Tibial artery (tissue), 4 donors: ENCODE measurements at regions of chr9 and their contacts with region 1.

Region 1: GRCh38 chr9:136381311-136381710 is 7.8 kb upstream of the CARD9 start:
- DNase-seq: no peak
- H3K4me3 ChIP-seq: no peak overlapping the region
- H3K27ac ChIP-seq: no peak overlapping the region
- H3K4me1 ChIP-seq: no peaks in the 10 kb centered on the region
- H3K27me3 ChIP-seq: no peaks in the 10 kb centered on the region
- CTCF ChIP-seq: no peak

Region 2: DNA sequence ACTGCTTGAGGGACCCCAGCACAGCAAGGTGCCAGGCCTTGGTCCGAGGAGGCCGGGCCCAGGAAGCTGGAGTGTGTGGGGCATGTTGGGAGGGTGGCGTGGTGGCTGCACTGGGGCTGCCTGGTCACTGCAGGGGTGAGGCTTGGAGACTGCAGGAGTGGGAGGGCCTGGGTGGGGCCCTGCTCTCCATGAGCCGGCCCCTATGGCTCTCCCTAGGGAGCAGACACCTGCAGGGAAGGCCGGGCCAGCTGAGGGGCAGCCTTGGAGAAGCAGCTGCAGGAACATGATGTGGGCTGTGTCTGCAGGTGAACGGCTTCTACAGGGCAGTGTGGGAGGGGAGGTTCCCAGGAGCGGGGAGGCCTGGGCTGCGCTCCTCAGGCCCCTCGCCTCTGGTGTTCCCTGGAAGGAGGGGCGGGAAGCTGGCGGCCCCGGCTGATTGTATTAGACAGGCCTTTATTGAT is 220.9 kb before region 1 on chr9:
- intact Hi-C with region 1: no loop called
- DNase-seq: no peak
- H3K4me3 ChIP-seq: no peak overlapping the region
- H3K27ac ChIP-seq: no peak overlapping the region
- H3K4me1 ChIP-seq: no peaks in the 10 kb centered on the region
- H3K27me3 ChIP-seq: peaks cover 0 to 53% of the 10 kb centered on the region in 2 donors
- CTCF ChIP-seq: no peak

Region 3: DNA sequence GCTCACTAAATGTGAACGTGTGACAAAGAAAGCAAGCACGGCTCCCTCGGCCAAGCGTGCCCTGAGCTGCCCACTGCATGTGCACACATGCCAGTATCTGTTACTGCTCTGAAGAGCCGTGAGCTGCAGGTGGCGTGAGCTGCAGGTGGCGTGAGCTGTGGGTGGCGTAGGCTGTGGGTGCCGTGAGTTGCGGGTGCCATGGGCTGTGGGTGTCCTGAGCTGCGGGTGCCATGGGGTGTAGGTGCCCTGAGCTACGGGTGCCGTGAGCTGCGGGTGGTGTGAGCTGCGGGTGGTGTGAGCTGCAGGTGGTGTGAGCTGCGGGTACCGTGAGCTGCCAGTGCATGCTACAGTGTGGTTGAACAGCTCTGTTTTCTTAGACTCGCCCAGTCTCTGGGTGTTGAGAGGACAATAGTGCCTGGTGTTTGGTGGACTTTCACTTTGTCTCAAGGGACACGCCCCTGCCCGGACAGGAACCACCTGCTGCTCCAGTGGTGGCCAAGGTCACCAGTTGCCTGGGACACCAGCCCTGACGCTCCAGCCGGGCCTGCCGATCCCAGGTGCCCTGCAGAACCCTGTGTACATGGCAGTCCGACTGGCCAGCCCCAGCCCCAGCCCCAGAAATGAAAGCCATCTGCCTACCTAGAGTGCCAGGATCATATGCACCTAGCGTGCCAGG is 84.2 kb before region 1 on chr9:
- intact Hi-C with region 1: no loop called
- DNase-seq: no peak
- H3K4me3 ChIP-seq: no peak overlapping the region
- H3K27ac ChIP-seq: no peak overlapping the region
- H3K4me1 ChIP-seq: no peaks in the 10 kb centered on the region
- H3K27me3 ChIP-seq: peaks cover 0 to 45% of the 10 kb centered on the region in 2 donors
- CTCF ChIP-seq: no peak

Region 4: DNA sequence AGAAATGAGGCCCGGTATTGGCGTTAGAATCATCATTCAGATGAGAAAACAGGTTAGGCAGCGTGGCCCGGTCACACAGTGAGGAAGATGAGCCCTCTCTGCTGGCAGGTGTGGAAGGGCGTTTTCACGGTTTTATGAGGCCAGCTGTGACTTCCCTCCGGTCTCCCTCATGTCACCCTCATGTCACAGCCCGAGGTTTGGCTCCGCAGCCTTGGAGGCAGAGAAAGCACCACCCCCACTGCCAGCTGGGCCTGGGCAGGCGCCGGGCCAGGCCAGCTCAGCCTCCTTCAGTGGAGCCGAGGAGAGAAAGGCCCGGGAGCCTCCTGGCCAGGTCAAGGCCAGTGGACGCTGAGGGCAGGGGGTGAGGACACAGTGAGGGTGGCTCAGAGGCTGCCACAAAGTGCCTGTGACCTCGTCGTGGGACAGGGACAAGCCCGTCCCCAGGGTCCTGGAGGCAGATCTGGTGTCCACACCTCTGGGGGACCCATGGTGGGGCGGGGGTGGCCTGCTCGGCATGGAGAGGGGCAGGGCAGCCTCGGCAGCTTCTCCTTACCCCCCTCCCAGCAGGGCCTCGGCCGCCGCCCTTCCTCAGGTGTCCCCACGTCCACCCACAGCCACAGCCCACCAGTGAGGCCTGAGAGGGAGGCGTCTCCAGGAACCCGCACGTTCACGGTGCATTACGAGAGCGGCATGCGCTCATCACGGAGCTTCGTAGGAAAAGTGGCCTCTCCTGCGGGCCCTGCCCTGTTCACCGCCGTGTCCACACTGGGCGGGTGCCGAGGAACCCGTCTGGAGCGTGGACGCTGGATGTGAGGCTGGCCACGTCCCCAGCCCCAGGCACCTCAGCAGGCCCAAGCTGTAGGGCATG is 1009.5 kb after region 1 on chr9:
- intact Hi-C with region 1: loop called (anchors 5 kb)
- DNase-seq: peak in 1 of 2 donors; percentile 53
- H3K4me3 ChIP-seq: no peak overlapping the region
- H3K27ac ChIP-seq: no peak overlapping the region
- H3K4me1 ChIP-seq: no peaks in the 10 kb centered on the region
- H3K27me3 ChIP-seq: no peaks in the 10 kb centered on the region
- CTCF ChIP-seq: no peak